AG04450 (cell line): ENCODE measurements at regions of chr11 and their contacts with region 1.

Region 1: GRCh38 chr11:57800444-57801182 is 39.0 kb downstream of the CTNND1 start:
- DNase-seq: peak; percentile 34
- H3K4me3 ChIP-seq: no peak overlapping the region
- H3K27ac ChIP-seq: no peak overlapping the region
- H3K27me3 ChIP-seq: no peaks in the 10 kb centered on the region
- CTCF ChIP-seq: peak; percentile 85

Region 2: DNA sequence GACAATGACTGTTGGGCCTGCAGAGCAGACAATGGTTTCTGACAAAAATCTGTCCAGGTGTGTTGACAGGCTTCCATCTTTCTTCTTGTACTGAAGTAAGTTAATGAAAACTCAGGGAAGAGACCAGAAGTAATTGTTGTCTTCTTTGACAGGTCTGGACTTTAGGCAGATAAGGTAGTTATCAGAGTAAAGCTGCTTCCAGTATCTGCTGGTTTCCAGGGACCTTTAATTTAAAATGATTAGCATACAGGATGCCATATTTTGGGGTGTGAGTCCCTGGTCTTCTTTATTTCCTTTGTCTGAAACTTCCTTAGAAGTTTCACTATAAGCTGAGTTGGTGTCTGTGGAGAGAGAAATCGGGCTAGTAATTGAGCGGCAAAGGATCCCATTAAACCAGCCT is 86.8 kb before region 1 on chr11:
- CTCF ChIA-PET with region 1: interaction called, 11 read pairs
- POLR2A ChIA-PET with region 1: interaction called, 3 read pairs
- DNase-seq: no peak
- H3K4me3 ChIP-seq: peak overlapping the region; percentile 100
- H3K27ac ChIP-seq: no peak overlapping the region
- H3K27me3 ChIP-seq: no peaks in the 10 kb centered on the region
- CTCF ChIP-seq: no peak

Region 3: DNA sequence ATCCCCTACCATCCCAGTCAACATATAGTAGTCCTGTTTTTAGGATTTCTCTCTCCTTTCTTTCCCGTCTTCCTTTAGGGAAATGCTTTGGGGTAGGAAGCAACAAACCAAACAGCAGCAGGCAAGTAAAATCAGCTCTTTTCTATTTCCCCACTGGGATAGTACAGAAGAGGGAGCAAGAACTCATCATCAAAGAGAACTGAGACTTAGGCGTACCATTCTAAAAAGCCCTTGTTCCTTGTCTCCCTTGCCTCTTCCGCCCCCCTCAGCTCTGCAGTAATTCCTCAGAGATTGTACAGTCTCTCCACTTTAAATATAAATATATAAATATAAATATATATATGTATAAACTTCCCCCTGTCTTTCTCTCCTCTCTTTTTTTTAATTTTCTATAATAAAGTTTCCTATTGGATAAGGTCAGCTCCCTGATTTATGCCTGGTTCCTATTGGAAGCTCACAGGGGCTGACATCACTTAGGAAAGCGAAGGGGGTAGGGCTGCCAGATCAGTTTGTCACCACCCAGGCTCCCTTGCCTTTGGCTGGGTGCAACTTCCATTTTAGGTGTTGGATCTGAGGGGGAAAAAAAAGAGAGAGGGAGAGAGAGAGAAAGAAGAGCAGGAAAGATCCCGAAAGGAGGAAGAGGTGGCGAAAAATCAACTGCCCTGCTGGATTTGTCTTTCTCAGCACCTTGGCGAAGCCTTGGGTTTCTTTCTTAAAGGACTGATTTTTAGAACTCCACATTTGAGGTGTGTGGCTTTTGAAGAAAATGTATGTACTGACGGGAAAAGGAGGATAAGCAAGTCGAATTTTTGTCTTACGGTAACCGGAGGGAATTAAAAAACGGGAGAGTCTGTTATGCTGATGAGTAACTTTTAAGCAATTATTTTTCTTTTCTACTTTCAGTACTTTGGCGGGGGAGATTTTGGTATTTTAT is 39.0 kb before region 1 on chr11 and contains the start of gene CTNND1:
- CTCF ChIA-PET with region 1: interaction called, 157 read pairs
- POLR2A ChIA-PET with region 1: interaction called, 4 read pairs
- DNase-seq: peak; percentile 96
- H3K4me3 ChIP-seq: peak within 1 kb of the TSS; percentile 89
- H3K27ac ChIP-seq: peak within 1 kb of the TSS; percentile 98
- H3K27me3 ChIP-seq: no peaks in the 10 kb centered on the region
- CTCF ChIP-seq: no peak
- polyA plus RNA-seq, gene CTNND1: 190 and 191 TPM in 2 replicates

Region 4: GRCh38 chr11:57778318-57779037 is 22.1 kb before region 1 on chr11:
- CTCF ChIA-PET with region 1: interaction called, 79 read pairs
- POLR2A ChIA-PET with region 1: interaction called, 3 read pairs
- DNase-seq: peak; percentile 95
- H3K4me3 ChIP-seq: peak overlapping the region; percentile 10
- H3K27ac ChIP-seq: peak overlapping the region; percentile 95
- H3K27me3 ChIP-seq: no peaks in the 10 kb centered on the region
- CTCF ChIP-seq: no peak

Region 5: DNA sequence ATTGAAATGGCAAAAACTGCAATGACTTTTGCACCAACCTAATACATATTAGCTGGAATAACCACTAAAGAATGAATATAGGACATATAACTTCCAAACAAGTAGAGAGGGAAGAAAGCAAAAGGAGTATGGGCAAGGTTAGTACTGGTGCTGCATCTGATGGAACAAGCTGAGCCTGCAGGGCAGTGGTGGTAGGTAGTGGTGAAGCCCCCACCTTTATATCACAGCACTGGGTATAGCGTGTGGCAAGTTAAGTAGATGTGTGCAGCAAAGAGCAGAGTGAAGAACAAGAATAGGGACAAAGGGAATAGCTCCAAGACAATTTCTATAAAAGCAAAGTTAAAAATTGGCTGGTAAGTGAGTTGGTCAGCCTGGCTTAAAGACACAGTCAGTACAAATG is 23.2 kb after region 1 on chr11:
- CTCF ChIA-PET with region 1: interaction called, 19 read pairs
- POLR2A ChIA-PET with region 1: no interaction called
- DNase-seq: no peak
- H3K4me3 ChIP-seq: no peak overlapping the region
- H3K27ac ChIP-seq: no peak overlapping the region
- H3K27me3 ChIP-seq: no peaks in the 10 kb centered on the region
- CTCF ChIP-seq: no peak

Region 6: GRCh38 chr11:58513747-58514367 is 713.2 kb after region 1 on chr11:
- CTCF ChIA-PET with region 1: interaction called, 26 read pairs
- POLR2A ChIA-PET with region 1: no interaction called
- DNase-seq: peak; percentile 52
- H3K4me3 ChIP-seq: no peak overlapping the region
- H3K27ac ChIP-seq: no peak overlapping the region
- H3K27me3 ChIP-seq: no peaks in the 10 kb centered on the region
- CTCF ChIP-seq: peak; percentile 75